ENCODE measurements at regions of chr12 and their contacts with region 1.

Region 1: GRCh38 chr12:109385339-109386067 is 37.8 kb downstream of the MYO1H start:
- DNase-seq: peak; percentile 12 to 40 (median 22)
- ATAC-seq: peak; percentile 28; the same call in 1 of the 3 replicates
- H3K4me3 ChIP-seq: no peak overlapping the region
- H3K27ac ChIP-seq: no peak overlapping the region
- H3K4me1 ChIP-seq: no peaks in the 10 kb centered on the region
- H3K27me3 ChIP-seq: peaks cover 2 to 9% of the 10 kb centered on the region in 2 experiments; a peak in 2 of 5 replicates
- CTCF ChIP-seq: peak; percentile 51 to 80 (median 53); a peak in 4 of 6 replicates
- EP300 ChIP-seq: no peak
- POLR2A ChIP-seq: no peak
- RAD21 ChIP-seq: peak; percentile 86 to 91

Region 2: DNA sequence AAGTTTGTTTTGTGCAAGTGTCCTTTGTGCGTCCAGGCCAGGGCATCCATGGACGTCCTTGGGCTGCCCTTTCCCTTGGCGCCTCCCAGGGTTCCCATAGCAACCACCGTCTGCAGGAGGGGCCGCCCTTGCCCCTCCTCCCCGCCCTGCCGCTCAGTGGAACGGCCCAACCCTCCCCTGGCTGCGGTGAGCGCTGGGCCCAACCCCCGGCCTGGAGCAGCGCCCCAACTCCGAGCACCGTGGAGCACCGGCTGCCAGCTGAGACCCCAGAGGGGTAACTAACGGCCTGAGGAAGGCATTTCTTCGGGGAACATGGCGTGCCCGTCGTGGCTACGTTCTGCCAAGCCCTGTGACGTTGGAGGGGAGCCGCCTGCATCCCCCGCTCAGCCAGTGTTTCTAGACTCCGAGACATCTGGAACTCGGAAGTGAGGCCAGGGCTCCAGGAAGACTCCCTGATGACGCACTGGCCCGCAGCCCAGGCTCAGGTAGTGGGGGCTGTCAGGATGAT is 274.5 kb before region 1 on chr12:
- CTCF ChIA-PET with region 1: no interaction called
- POLR2A ChIA-PET with region 1: no interaction called
- in situ Hi-C with region 1: loop called (anchors 10 kb)
- intact Hi-C with region 1: loop called (anchors 5 kb)
- DNase-seq: peak; percentile 86 to 90 (median 90)
- ATAC-seq: peak; percentile 99
- H3K4me3 ChIP-seq: peak overlapping the region; percentile 41
- H3K27ac ChIP-seq: peak overlapping the region; percentile 64
- H3K4me1 ChIP-seq: peaks cover 8 to 9% of the 10 kb centered on the region in 2 experiments
- H3K27me3 ChIP-seq: no peaks in the 10 kb centered on the region
- CTCF ChIP-seq: no peak
- EP300 ChIP-seq: no peak
- POLR2A ChIP-seq: peak; percentile 63; the same call in 1 of the 2 replicates
- RAD21 ChIP-seq: 0 out of 4 replicates have a peak, but pooled peaks of 1 of the 2 experiments have one; percentile 5

Region 3: DNA sequence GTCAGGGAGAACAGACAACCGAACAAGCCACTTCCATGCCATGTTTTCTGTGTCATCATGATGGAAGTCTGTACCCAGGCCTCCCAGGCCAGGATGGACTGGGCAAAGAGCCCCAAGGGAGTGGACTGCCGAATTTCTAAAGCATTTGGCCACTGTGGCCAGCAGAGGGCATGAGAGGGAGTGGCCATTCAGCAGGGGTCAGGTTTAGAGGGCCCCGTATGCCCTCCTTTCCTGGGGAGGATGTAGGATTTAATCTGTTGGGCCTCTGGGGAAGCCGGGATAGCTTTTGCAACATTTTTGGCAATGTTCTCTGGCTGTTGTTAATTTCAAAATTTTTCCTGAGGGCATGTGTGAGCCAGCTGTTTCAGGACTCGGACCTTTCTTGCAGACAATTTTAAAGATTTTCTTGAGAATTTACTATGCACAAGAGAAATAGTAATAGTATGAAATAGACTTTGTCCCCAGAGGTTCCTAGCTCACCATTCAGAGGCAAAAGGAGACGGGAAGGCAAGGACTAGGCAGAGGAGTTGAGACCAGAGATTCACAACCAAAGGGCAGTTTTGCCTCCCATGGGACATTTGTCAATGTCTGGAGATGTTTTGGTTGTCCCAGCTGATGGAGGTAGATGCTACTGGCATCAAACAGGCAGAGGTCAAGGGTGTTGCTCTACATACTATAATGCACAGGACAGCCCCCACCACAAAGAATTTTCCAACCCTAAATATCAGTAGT is 251.2 kb before region 1 on chr12:
- CTCF ChIA-PET with region 1: interaction called, 3 read pairs
- POLR2A ChIA-PET with region 1: no interaction called
- in situ Hi-C with region 1: no loop called
- intact Hi-C with region 1: loop called (anchors 10 kb)
- DNase-seq: peak; percentile 45 to 65 (median 51)
- ATAC-seq: peak; percentile 87
- H3K4me3 ChIP-seq: no peak overlapping the region
- H3K27ac ChIP-seq: no peak overlapping the region
- H3K4me1 ChIP-seq: no peaks in the 10 kb centered on the region; a peak in 3 of 5 replicates
- H3K27me3 ChIP-seq: peaks cover 21 to 37% of the 10 kb centered on the region in 2 experiments; a peak in 4 of 5 replicates
- CTCF ChIP-seq: peak; percentile 62 to 79 (median 68)
- EP300 ChIP-seq: no peak
- POLR2A ChIP-seq: no peak
- RAD21 ChIP-seq: peak; percentile 25 to 68

Region 4: DNA sequence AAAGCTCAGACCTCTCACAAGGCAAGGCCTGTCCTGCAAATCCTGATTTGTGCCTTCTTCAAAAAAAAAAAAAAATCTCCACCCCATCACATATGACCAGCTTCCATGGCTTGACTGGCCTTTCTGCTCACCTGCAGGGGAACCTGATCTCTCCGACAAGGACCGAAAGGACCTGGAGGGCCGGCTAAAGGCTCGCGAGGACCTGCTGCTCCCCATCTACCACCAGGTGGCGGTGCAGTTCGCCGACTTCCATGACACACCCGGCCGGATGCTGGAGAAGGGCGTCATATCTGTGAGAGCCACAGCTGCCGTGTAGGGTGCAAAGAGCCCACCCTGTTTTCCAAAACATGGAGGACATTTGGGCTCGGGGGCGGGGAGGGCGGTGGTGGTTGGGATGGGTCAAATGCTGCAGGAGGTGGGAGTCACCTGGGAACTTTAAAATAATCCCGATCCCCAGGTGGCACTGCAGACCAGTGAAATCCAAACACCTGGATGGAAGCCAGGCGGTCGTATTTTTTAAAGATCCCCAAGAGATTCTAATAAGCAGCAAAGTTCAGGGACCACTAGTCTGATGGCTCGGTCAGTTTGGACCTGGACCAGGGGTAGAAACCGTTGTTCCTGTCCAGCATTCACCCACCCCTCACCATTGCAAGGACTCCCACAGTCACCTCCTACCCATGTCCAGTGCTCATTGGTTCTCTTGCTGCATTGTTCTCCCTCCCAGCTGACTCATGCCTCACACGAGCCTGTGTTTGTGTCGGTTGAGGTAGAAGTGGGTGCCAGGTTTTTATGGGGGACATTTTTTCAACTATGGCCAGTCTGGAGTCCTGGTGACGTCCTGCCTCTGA is 121.2 kb before region 1 on chr12:
- CTCF ChIA-PET with region 1: interaction called, 39 read pairs
- POLR2A ChIA-PET with region 1: interaction called, 3 read pairs
- in situ Hi-C with region 1: loop called (anchors 5 kb)
- intact Hi-C with region 1: loop called (anchors 1 kb)
- DNase-seq: peak; percentile 87
- ATAC-seq: peak; percentile 99
- H3K4me3 ChIP-seq: no peak overlapping the region
- H3K27ac ChIP-seq: no peak overlapping the region
- H3K4me1 ChIP-seq: peaks cover 0 to 6% of the 10 kb centered on the region in 2 experiments; a peak in 1 of 5 replicates
- H3K27me3 ChIP-seq: peaks cover 4 to 31% of the 10 kb centered on the region in 2 experiments; a peak in 2 of 5 replicates
- CTCF ChIP-seq: peak; percentile 86 to 92 (median 88)
- EP300 ChIP-seq: no peak
- POLR2A ChIP-seq: no peak
- RAD21 ChIP-seq: peak; percentile 65 to 83

Region 5: GRCh38 chr12:109428037-109428629 is 42.6 kb after region 1 on chr12:
- CTCF ChIA-PET with region 1: no interaction called
- POLR2A ChIA-PET with region 1: no interaction called
- in situ Hi-C with region 1: no loop called
- intact Hi-C with region 1: no loop called
- DNase-seq: peak; percentile 79 to 87 (median 85)
- ATAC-seq: peak; percentile 95
- H3K4me3 ChIP-seq: no peak overlapping the region
- H3K27ac ChIP-seq: no peak overlapping the region
- H3K4me1 ChIP-seq: no peaks in the 10 kb centered on the region; a peak in 1 of 5 replicates
- H3K27me3 ChIP-seq: peaks cover 7 to 33% of the 10 kb centered on the region in 2 experiments; a peak in 4 of 5 replicates
- CTCF ChIP-seq: peak; percentile 92 to 98 (median 96)
- EP300 ChIP-seq: no peak
- POLR2A ChIP-seq: no peak
- RAD21 ChIP-seq: peak; percentile 54 to 86

Measured in K562 (cell line).